Cardiac septum (tissue), 1 donor: ENCODE measurements at regions of chr19 and their contacts with region 1.

Region 1: GRCh38 chr19:46924874-46925547 is 64.2 kb downstream of the ARHGAP35 start:
- DNase-seq: no peak

Region 2: GRCh38 chr19:46872967-46873366 is 52.0 kb before region 1 on chr19:
- intact Hi-C with region 1: loop called (anchors 5 kb)
- DNase-seq: no peak

Region 3: GRCh38 chr19:46984077-46985010 is 59.3 kb after region 1 on chr19:
- intact Hi-C with region 1: loop called (anchors 5 kb)
- DNase-seq: no peak